ENCODE measurements at regions of chr6 and their contacts with region 1.

Region 1: GRCh38 chr6:73519926-73520687 is 725 bp downstream of the EEF1A1 start:
- DNase-seq: peak; percentile 67 to 79
- ATAC-seq: peak; percentile 47

Region 2: DNA sequence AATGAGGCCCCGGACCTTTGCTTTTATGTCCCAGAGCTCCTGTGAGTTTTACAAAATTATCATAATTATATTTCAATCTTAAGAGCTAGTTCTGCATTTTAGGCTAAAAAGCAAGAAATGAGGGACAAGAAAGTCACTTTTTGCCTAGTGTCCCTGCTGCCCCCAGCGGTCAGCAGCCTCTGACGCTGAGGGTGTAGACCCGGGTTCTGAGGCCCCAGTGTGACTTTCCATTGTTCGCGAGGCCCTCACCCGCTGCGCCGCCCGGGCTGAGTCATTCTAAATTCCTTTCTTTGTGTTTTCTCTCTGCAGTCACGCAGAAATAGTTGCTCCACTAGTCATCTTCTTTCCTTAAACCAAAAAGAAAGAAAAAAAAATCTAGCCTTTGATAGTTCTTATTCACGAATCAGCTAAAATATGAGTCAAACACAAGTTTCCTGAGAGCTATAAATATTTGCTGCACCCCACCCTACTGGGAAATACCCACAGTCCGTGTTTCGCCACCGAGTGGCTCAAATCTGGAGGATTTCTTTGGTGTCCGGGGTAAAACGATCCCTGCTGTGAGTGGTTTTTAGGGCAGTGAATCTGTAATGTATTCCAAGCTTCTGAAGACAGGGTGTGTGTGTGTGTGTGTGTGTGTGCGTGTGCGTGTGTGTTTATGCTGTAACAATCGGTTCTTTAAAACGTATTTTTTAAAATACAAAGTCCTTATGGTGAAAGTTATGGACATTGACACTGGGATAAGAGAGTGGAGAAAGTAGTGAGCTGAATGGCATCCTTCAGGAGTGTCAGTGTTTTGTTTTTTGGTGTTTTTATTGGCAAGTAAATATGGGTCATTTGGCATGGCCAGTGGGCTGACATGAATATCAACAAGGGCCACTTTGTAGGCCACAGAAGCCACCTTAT is 60.4 kb after region 1 on chr6:
- intact Hi-C with region 1: loop called in 1 of 2 experiments (anchors 5 kb)
- DNase-seq: peak; percentile 62 to 78
- ATAC-seq: peak; percentile 54

Region 3: DNA sequence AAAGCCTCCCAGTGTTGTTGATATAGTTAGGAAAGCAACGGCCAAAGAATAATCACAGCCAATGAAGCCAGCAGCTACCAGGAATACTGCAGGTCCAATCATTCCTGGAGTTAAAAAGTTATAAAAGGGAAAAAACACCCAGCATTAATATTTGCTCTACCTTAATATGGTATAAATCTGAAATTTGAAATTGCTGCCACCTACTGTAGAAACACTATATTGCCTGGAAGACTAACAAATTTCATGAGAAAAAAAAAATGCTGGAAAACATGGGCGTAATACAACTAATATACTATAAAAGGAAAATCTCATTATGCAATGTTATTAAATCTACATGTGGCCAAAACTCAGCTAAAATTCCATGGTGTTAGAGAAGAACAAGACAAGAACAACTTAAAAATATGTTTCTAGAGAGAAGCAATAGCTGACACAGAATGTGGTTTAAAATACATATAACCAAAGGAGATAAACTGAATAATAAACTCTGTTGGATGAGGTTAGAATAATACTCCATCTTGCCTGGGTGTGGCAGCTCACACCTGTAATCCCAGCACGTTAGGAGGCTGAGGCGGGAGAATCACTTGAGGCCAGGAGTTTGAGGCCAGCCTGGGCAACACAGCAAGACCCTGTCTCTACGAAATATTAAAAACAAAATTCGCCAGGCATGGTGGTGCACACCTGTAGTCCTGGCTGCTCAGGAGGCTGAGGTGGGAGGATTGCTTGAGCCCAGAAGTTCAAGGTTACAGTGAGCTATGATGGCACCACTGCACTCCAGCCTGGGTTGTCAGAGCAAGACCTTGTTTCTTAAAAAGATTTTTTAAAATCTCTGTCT is 90.6 kb after region 1 on chr6:
- intact Hi-C with region 1: loop called (anchors 2 to 10 kb)
- DNase-seq: no peak
- ATAC-seq: peak; percentile 61

Measured in left colon (tissue), 2 donors.